GM12878 (cell line): ENCODE measurements at regions of chr9 and their contacts with region 1.

Region 1: DNA sequence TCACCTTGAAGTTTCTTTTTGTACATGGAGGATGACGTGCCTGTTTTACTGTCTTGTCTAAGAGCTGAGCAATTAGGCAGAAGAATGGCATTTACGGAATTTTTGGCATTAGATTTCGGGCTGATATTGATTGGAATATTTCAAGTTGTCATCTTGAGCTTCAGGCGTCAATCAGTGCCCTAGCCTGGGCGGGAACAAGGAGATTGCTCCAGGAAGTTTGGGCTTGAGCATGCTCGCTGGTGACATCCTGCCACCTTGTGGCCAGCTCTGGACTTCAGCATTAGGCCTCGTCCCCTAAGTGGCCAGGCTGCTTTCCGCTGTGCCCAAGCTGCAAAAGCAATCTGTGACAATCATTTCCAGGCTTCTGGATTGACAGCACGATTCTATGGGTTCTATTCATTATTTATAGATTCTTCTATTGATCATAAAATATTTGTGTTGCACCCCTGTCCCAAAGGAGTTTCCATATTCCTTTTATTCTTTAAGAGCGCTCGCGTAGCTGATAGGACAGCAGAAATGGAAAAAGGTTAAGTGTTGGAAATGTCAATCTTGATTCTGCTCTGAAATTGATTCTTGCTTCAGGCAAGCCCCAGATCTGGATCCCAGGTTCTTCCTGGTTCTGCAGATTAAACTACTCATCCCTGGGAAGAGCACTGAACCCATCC is 79.3 kb downstream of the SLC28A3 start:
- DNase-seq: peak; percentile 40
- ATAC-seq: peak; percentile 96
- H3K4me3 ChIP-seq: no peak overlapping the region
- H3K27ac ChIP-seq: no peak overlapping the region
- H3K4me1 ChIP-seq: no peaks in the 10 kb centered on the region
- H3K27me3 ChIP-seq: no peaks in the 10 kb centered on the region
- CTCF ChIP-seq: peak; percentile 82 to 91 (median 88)
- EP300 ChIP-seq: no peak
- POLR2A ChIP-seq: no peak
- RAD21 ChIP-seq: peak; percentile 86

Region 2: GRCh38 chr9:83920927-83921707 is 340.1 kb before region 1 on chr9 and contains the start of gene KIF27:
- CTCF ChIA-PET with region 1: interaction called, 25 read pairs
- POLR2A ChIA-PET with region 1: no interaction called
- RAD21 ChIA-PET with region 1: interaction called, 7 read pairs
- SMC1A ChIA-PET with region 1: interaction called, 4 read pairs
- in situ Hi-C with region 1: no loop called
- intact Hi-C with region 1: no loop called
- DNase-seq: peak; percentile 80
- ATAC-seq: peak; percentile 95
- H3K4me3 ChIP-seq: peak within 1 kb of the TSS; percentile 79
- H3K27ac ChIP-seq: peak within 1 kb of the TSS; percentile 79
- H3K4me1 ChIP-seq: peaks cover 9% of the 10 kb centered on the region
- H3K27me3 ChIP-seq: no peaks in the 10 kb centered on the region
- CTCF ChIP-seq: peak in 2 of 3 experiments; percentile 11 to 19; a peak in 3 of 6 replicates
- EP300 ChIP-seq: no peak
- POLR2A ChIP-seq: peak; percentile 81
- RAD21 ChIP-seq: no peak
- polyA plus RNA-seq, gene KIF27: 0.64 to 0.92 TPM

Region 3: DNA sequence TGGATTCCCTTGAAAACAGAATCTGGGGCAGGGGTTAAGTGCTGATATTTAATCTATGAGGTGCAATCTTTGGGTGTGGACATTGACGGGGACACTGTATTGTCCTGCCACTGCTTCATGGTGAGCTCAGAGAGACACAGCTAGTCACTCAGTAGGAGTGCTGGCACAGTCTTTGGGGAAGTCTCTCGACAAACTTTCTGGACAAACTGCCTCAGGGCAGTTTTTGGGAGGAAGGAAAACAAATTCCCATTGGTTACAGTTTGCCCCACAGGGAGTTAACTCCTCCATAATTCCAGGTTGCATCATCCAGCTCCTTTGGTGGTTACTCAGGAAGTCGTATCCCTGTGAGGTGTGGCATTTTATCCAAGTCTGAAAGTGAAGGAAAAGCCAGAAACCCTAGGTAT is 299.0 kb before region 1 on chr9:
- CTCF ChIA-PET with region 1: interaction called, 11 read pairs
- POLR2A ChIA-PET with region 1: no interaction called
- RAD21 ChIA-PET with region 1: interaction called, 3 read pairs
- SMC1A ChIA-PET with region 1: interaction called, 6 read pairs
- in situ Hi-C with region 1: no loop called
- intact Hi-C with region 1: no loop called
- DNase-seq: no peak
- ATAC-seq: no peak
- H3K4me3 ChIP-seq: no peak overlapping the region
- H3K27ac ChIP-seq: no peak overlapping the region
- H3K4me1 ChIP-seq: no peaks in the 10 kb centered on the region
- H3K27me3 ChIP-seq: no peaks in the 10 kb centered on the region
- CTCF ChIP-seq: no peak
- EP300 ChIP-seq: no peak
- POLR2A ChIP-seq: no peak
- RAD21 ChIP-seq: no peak

Region 4: GRCh38 chr9:84230355-84231145 is 30.7 kb before region 1 on chr9:
- CTCF ChIA-PET with region 1: interaction called, 13 read pairs
- POLR2A ChIA-PET with region 1: no interaction called
- RAD21 ChIA-PET with region 1: interaction called, 3 read pairs
- SMC1A ChIA-PET with region 1: interaction called, 5 read pairs
- in situ Hi-C with region 1: no loop called
- intact Hi-C with region 1: no loop called
- DNase-seq: no peak
- ATAC-seq: no peak
- H3K4me3 ChIP-seq: no peak overlapping the region
- H3K27ac ChIP-seq: no peak overlapping the region
- H3K4me1 ChIP-seq: no peaks in the 10 kb centered on the region
- H3K27me3 ChIP-seq: no peaks in the 10 kb centered on the region
- CTCF ChIP-seq: no peak
- EP300 ChIP-seq: no peak
- POLR2A ChIP-seq: no peak
- RAD21 ChIP-seq: no peak

Region 5: GRCh38 chr9:84271531-84271900 is 10.3 kb after region 1 on chr9:
- CTCF ChIA-PET with region 1: interaction called, 30 read pairs
- POLR2A ChIA-PET with region 1: no interaction called
- RAD21 ChIA-PET with region 1: no interaction called
- SMC1A ChIA-PET with region 1: interaction called, 8 read pairs
- in situ Hi-C with region 1: no loop called
- intact Hi-C with region 1: no loop called
- DNase-seq: no peak
- ATAC-seq: peak; percentile 82
- H3K4me3 ChIP-seq: peak overlapping the region; percentile 48
- H3K27ac ChIP-seq: no peak overlapping the region
- H3K4me1 ChIP-seq: peaks cover 4% of the 10 kb centered on the region; the same call in 1 of the 2 replicates
- H3K27me3 ChIP-seq: no peaks in the 10 kb centered on the region
- CTCF ChIP-seq: no peak
- EP300 ChIP-seq: no peak
- POLR2A ChIP-seq: no peak
- RAD21 ChIP-seq: no peak

Region 6: GRCh38 chr9:84296146-84296843 is 35.1 kb after region 1 on chr9:
- CTCF ChIA-PET with region 1: interaction called, 26 read pairs
- POLR2A ChIA-PET with region 1: interaction called, 4 read pairs
- RAD21 ChIA-PET with region 1: interaction called, 17 read pairs
- SMC1A ChIA-PET with region 1: interaction called, 42 read pairs
- in situ Hi-C with region 1: no loop called
- intact Hi-C with region 1: no loop called
- DNase-seq: peak; percentile 66
- ATAC-seq: peak; percentile 80
- H3K4me3 ChIP-seq: no peak overlapping the region
- H3K27ac ChIP-seq: peak overlapping the region; percentile 86
- H3K4me1 ChIP-seq: peaks cover 46% of the 10 kb centered on the region
- H3K27me3 ChIP-seq: no peaks in the 10 kb centered on the region
- CTCF ChIP-seq: no peak
- EP300 ChIP-seq: peak; percentile 63 to 70; a peak in 3 of 4 replicates
- POLR2A ChIP-seq: 0 out of 2 replicates have a peak, but pooled peaks have one; percentile 18
- RAD21 ChIP-seq: no peak

Region 7: GRCh38 chr9:84315278-84315877 is 54.2 kb after region 1 on chr9:
- CTCF ChIA-PET with region 1: interaction called, 42 read pairs
- POLR2A ChIA-PET with region 1: interaction called, 3 read pairs
- RAD21 ChIA-PET with region 1: interaction called, 22 read pairs
- SMC1A ChIA-PET with region 1: interaction called, 31 read pairs
- in situ Hi-C with region 1: loop called (anchors 5 kb)
- intact Hi-C with region 1: loop called (anchors 1 kb)
- DNase-seq: no peak
- ATAC-seq: peak; percentile 84
- H3K4me3 ChIP-seq: no peak overlapping the region
- H3K27ac ChIP-seq: no peak overlapping the region
- H3K4me1 ChIP-seq: no peaks in the 10 kb centered on the region; the same call in 1 of the 2 replicates
- H3K27me3 ChIP-seq: no peaks in the 10 kb centered on the region
- CTCF ChIP-seq: peak; percentile 71 to 87 (median 79); a peak in 5 of 6 replicates
- EP300 ChIP-seq: no peak
- POLR2A ChIP-seq: no peak
- RAD21 ChIP-seq: peak; percentile 95